Posterior cingulate gyrus (tissue), 11 donors: ENCODE measurements at regions of chr22 and their contacts with region 1.

Region 1: GRCh38 chr22:38353142-38353629 is 36.0 kb upstream of the CSNK1E start:
- DNase-seq: peak; percentile 31 to 96 (median 74)

Region 2: GRCh38 chr22:38051900-38052862 is 301.0 kb before region 1 on chr22:
- intact Hi-C with region 1: loop called (anchors 1 kb)
- DNase-seq: peak; percentile 75 to 98 (median 87)

Region 3: GRCh38 chr22:38262051-38262795 is 91.0 kb before region 1 on chr22:
- intact Hi-C with region 1: no loop called
- DNase-seq: peak; percentile 56 to 96 (median 78)

Region 4: DNA sequence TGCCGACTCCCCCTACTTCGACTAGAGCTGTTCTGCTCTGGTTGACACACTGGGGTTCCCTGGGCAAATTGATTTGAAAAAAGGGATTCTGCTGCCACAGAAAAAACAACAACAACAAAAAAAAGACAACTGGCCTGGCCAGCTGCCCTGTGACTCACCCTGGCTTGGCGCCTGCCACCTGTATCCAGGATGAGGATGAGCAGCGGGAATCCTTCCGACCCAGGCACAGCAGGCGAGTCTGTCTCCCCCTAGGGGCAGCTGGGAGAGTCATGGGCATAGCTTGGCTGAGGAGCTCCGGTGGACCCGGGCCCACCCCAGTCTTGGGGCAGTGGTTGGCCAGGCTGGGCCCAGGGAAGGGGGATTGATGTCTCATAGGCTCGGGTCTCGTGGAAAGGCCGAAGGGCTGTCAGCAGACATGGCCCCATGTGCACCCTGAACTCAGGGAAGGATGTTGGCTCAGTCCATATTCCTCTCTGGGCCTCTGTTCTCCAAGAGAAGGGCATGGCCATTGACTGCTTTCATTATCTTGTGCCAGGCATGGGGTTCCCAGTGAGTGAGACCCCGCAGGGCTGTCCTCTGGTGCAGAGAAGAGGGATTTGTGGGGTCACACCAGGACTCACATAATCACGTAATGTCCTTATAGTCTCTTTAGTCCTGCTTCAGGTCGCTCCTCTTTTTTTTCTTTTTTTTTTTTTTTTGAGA is 413.0 kb after region 1 on chr22:
- intact Hi-C with region 1: no loop called
- DNase-seq: peak; percentile 51 to 95 (median 73)